GM12878 (cell line): ENCODE measurements at regions of chr1 and their contacts with region 1.

Region 1: DNA sequence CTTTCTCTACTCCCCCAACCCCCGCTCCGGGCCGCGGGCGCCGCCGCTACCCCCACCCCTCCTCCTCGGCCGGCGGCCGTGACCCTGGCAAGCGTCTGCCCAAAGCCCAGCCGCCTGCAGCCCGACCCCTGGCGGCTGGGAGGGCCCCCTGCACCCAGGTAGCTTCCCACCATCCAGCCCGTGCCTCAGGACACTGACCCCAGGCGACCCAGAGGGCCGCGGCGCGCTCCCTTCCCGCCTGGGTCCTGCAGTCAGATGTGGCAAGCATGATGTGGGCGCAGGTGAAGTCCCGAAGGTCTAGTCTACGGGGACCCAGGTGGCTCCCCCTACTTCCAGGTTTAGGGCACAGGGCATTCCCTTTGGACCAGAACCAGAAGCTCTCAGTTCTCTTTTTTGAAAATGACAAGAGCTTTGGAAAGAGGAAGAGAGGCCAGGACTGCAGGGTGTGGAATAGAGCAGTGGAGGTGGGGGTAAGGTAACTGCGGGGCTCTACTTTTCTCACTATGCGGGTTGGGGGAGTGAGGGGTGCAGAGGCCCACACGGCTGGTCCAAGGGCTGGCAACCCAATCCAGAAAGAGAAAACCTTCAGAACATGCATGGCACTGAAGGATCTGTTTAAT is at the start of gene DENND4B:
- DNase-seq: no peak
- ATAC-seq: peak; percentile 80
- H3K4me3 ChIP-seq: peak within 1 kb of the TSS; percentile 100
- H3K27ac ChIP-seq: peak within 1 kb of the TSS; percentile 95
- H3K4me1 ChIP-seq: peaks cover 21% of the 10 kb centered on the region
- H3K27me3 ChIP-seq: no peaks in the 10 kb centered on the region
- CTCF ChIP-seq: peak; percentile 78 to 95 (median 90)
- EP300 ChIP-seq: no peak
- POLR2A ChIP-seq: peak; percentile 41
- RAD21 ChIP-seq: peak; percentile 65
- polyA plus RNA-seq, gene DENND4B: 12.0 to 13.4 TPM

Region 2: GRCh38 chr1:153805042-153805745 is 141.5 kb before region 1 on chr1:
- CTCF ChIA-PET with region 1: interaction called, 4 read pairs
- POLR2A ChIA-PET with region 1: interaction called, 9 read pairs
- RAD21 ChIA-PET with region 1: interaction called, 11 read pairs
- SMC1A ChIA-PET with region 1: interaction called, 4 read pairs
- in situ Hi-C with region 1: no loop called
- intact Hi-C with region 1: no loop called
- DNase-seq: peak; percentile 98
- ATAC-seq: peak; percentile 99
- H3K4me3 ChIP-seq: 0 out of 2 replicates have a peak overlapping the region, but pooled peaks have one; percentile 38
- H3K27ac ChIP-seq: peak overlapping the region; percentile 89
- H3K4me1 ChIP-seq: peaks cover 39% of the 10 kb centered on the region
- H3K27me3 ChIP-seq: no peaks in the 10 kb centered on the region
- CTCF ChIP-seq: no peak
- EP300 ChIP-seq: peak; percentile 90 to 98
- POLR2A ChIP-seq: peak; percentile 38; the same call in 1 of the 2 replicates
- RAD21 ChIP-seq: no peak

Region 3: DNA sequence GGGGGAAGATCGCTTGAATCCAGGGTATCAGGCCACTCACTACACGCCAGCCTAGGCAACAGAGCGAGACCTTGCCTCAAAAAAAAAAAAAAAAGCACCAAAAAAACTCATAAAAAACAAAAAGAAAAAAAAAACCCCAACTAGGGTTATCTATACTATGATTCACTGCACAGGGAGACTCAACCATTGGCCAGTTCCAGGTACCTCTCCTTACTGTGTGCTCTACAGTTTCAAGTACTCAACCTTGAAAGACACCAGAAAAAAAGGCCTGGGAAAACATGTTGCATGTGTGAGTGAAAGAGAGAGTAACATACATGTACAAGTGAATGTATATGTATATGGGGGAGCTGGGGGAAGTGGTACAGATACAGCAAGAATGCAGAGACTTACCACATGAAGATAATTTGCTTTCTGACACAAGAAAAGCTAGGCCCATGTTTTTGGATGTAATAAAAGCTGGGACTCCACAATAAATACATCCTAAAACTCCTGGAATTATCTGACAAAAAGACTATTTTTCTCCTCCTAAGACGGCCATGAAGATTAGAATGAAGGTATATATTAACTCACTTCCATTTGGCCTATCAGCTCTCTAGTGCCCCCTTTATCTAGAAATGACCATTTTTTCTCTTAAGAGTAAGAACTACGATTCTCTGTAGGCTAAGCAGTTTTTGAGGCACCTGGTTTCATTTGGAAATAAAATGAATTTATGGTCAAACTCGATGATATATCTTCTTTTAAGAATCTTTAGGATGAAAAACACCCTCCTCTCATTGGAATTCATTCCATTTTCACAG is 119.4 kb before region 1 on chr1:
- CTCF ChIA-PET with region 1: interaction called, 21 read pairs
- POLR2A ChIA-PET with region 1: interaction called, 5 read pairs
- RAD21 ChIA-PET with region 1: interaction called, 25 read pairs
- SMC1A ChIA-PET with region 1: interaction called, 18 read pairs
- in situ Hi-C with region 1: no loop called
- intact Hi-C with region 1: no loop called
- DNase-seq: no peak
- ATAC-seq: peak; percentile 64
- H3K4me3 ChIP-seq: no peak overlapping the region
- H3K27ac ChIP-seq: peak overlapping the region; percentile 52
- H3K4me1 ChIP-seq: peaks cover 10% of the 10 kb centered on the region
- H3K27me3 ChIP-seq: no peaks in the 10 kb centered on the region
- CTCF ChIP-seq: 0 out of 6 replicates have a peak, but pooled peaks of 1 of the 3 experiments have one; percentile 11
- EP300 ChIP-seq: no peak
- POLR2A ChIP-seq: no peak
- RAD21 ChIP-seq: no peak

Region 4: DNA sequence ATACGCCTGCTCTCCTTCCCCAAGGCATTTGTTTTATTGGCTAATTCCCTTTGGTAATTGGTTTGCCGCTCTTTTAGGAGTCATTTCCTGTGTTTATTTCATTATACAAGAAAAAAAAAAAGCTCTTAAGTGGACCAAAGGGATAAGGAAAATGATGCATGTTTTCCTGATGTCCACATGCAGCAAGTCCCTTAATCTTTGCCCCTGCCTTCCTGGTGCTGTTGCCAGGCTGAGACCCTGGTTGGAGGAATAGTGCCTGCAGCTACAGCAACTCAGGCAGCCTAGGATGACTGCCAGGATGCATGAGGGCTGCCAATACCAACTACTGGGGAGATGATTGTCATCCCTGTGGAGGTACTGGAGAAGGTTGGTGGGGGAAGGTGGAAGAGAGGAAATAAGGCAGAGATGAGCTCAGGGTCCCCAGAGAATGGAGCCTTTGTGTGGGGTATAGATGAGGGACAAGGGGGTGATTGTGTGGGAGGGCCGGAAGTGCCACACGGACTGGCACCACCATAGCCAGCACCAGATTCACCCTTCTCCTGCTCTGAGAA is 17.9 kb before region 1 on chr1:
- CTCF ChIA-PET with region 1: interaction called, 54 read pairs
- POLR2A ChIA-PET with region 1: interaction called, 83 read pairs
- RAD21 ChIA-PET with region 1: interaction called, 55 read pairs
- SMC1A ChIA-PET with region 1: interaction called, 59 read pairs
- in situ Hi-C with region 1: no loop called
- intact Hi-C with region 1: no loop called
- DNase-seq: no peak
- ATAC-seq: no peak
- H3K4me3 ChIP-seq: no peak overlapping the region
- H3K27ac ChIP-seq: peak overlapping the region; percentile 74
- H3K4me1 ChIP-seq: peaks cover 18% of the 10 kb centered on the region
- H3K27me3 ChIP-seq: no peaks in the 10 kb centered on the region
- CTCF ChIP-seq: no peak
- EP300 ChIP-seq: no peak
- POLR2A ChIP-seq: no peak; the same call in 1 of the 2 replicates
- RAD21 ChIP-seq: no peak

Region 5: DNA sequence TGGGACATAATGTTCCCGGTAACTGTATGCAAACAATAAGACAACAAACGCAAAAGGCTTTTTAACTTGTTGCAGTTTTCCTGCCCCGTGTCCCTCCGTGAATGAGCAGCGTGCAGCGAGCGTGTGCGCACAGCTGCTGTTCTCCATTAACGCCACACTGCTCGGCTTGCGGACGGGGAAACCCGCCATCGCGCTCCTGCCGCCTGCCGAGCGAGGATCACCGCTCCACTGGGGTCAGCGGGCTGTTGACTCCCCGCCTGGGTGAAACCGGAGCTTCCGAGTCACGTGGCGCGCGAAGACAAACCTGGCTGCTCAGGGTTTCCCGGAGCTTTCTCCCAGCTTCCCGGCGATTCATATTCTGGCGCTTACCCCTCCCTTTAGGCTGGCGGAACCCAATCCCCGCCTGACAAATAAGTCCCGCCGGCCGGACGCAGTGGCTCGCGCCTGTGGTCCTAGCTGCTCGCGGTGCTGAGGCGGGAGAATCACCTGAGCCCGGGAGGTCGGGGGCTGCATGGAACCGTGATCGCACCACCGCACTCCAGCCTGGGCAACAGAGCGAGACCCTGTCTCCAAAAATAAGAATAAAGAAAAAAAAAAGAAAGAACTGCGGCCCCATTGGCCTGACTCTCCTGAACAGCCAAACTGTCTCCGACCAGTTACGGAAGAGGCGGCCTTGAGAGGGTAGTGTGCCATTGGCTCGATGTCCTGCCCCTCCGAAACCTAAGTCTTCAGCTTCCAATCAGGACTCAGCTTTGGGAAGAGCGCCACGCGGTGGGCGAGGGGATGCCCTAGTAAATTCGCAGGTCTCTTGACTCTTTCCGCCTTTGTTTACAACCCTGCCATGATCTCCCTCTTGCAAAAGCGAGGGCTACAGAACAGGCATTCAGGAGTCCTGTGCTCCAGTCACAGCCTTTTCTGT is 20.6 kb after region 1 on chr1 and contains the start of gene CREB3L4:
- CTCF ChIA-PET with region 1: interaction called, 53 read pairs
- POLR2A ChIA-PET with region 1: interaction called, 44 read pairs
- RAD21 ChIA-PET with region 1: interaction called, 34 read pairs
- SMC1A ChIA-PET with region 1: interaction called, 26 read pairs
- in situ Hi-C with region 1: no loop called
- intact Hi-C with region 1: loop called (anchors 1 kb)
- DNase-seq: peak; percentile 95
- ATAC-seq: peak; percentile 88
- H3K4me3 ChIP-seq: peak within 1 kb of the TSS; percentile 92
- H3K27ac ChIP-seq: peak within 1 kb of the TSS; percentile 91
- H3K4me1 ChIP-seq: peaks cover 15% of the 10 kb centered on the region
- H3K27me3 ChIP-seq: no peaks in the 10 kb centered on the region
- CTCF ChIP-seq: peak; percentile 25 to 63 (median 55); a peak in 5 of 6 replicates
- EP300 ChIP-seq: no peak; a peak in 1 of 4 replicates
- POLR2A ChIP-seq: peak; percentile 90
- RAD21 ChIP-seq: peak; percentile 26; the same call in 1 of the 2 replicates
- polyA plus RNA-seq, gene CREB3L4: 9.7 to 12.9 TPM

Region 6: GRCh38 chr1:154062309-154062708 is 115.6 kb after region 1 on chr1:
- CTCF ChIA-PET with region 1: no interaction called
- POLR2A ChIA-PET with region 1: no interaction called
- RAD21 ChIA-PET with region 1: no interaction called
- SMC1A ChIA-PET with region 1: no interaction called
- in situ Hi-C with region 1: no loop called
- intact Hi-C with region 1: no loop called
- DNase-seq: no peak
- ATAC-seq: no peak
- H3K4me3 ChIP-seq: no peak overlapping the region
- H3K27ac ChIP-seq: no peak overlapping the region
- H3K4me1 ChIP-seq: no peaks in the 10 kb centered on the region
- H3K27me3 ChIP-seq: no peaks in the 10 kb centered on the region
- CTCF ChIP-seq: no peak
- EP300 ChIP-seq: no peak
- POLR2A ChIP-seq: no peak
- RAD21 ChIP-seq: no peak